Activated CD8-positive, alpha-beta T cell treated with anti-CD3 and anti-CD28 coated beads for 36 hours (primary cell): ENCODE measurements at regions of chr12 and their contacts with region 1.

Region 1: DNA sequence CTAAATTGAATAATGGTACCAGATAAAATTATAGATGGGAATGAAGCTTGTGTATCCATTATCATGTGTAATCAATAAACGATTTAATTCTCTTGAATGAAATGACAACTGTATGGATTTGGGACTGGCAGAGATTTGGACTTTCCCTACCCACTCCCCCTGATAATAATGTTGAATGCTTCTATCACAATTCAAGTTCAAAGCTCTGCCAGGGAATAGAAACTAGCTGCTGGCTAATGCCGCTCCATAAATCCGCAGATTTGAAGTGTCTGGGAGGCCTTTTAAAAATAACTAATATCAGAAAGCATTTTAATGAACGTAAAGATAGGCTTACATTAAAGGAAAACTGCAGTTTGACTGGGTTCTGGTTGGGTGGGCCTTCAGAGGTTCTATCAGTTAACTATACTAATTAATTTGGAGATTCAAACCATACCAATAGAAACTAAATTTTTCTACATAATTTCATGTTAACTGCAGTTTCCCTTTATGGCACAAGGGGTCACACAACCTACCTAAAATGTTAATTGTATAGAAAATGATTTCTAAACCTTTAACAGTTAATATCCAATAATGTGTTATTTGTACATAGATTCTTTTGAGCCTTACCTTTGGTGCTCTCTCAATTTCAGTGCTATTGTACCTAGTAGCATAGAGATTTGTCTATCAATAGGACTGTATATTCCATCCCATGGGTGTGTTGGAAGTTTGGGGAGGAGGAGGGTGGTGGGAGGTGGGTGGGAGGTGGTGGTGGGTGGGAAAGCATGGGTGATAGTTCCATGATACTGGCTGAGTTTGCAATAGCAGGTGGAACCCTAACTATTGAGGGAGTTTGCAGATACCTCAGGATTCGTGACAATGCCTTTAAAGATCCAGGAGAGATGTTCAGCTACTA is 4.9 kb downstream of the HNRNPA1 start:
- DNase-seq: no peak
- ATAC-seq: no peak
- H3K4me3 Mint-ChIP-seq: no peak overlapping the region
- H3K27ac Mint-ChIP-seq: peak overlapping the region; percentile 73
- H3K4me1 Mint-ChIP-seq: peaks cover 38% of the 10 kb centered on the region
- H3K27me3 Mint-ChIP-seq: no peaks in the 10 kb centered on the region
- CTCF ChIP-seq: peak; percentile 57

Region 2: DNA sequence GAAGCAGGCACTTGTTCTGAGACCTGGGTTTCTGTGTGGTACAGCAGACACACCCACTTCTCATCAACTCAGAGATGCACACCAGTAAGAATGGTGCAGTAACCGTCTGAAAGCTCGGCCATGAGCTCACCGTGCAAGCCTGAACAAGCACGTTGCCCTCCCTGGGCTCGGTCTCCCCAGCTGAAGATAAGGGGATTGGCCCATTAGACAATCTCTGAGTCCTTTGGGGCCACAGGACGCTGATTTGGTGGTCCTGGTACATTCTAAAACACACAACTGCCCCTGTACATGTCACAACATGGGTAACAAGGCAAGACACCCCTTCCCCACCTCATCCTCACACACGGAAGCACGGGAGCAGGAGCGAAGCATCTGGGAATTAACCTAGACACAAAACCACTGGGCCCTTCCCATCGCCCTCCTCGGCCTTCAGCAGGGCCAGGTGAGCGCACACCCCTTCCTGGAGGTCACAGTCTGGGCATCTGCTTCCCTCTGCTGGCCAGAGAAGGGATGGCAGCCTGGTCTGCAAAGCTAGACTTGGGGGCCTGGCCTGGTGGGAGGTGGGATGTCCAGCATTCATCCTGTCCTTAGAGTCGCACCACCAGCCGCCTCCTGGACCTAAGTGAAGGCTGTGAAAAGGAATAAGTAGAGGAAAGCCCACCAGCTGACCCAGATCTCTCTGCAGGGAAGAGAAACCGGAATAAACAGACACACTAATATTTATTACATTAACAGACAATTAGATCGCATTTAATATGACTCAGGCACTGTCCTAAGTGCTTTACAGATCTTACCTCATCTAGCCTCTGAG is 77.7 kb before region 1 on chr12:
- CTCF ChIA-PET with region 1: no interaction called
- POLR2A ChIA-PET with region 1: no interaction called
- intact Hi-C with region 1: no loop called
- DNase-seq: peak; percentile 90
- ATAC-seq: peak; percentile 96
- H3K4me3 Mint-ChIP-seq: no peak overlapping the region
- H3K27ac Mint-ChIP-seq: no peak overlapping the region
- H3K4me1 Mint-ChIP-seq: no peaks in the 10 kb centered on the region
- H3K27me3 Mint-ChIP-seq: peaks cover 15% of the 10 kb centered on the region
- CTCF ChIP-seq: peak; percentile 92

Region 3: DNA sequence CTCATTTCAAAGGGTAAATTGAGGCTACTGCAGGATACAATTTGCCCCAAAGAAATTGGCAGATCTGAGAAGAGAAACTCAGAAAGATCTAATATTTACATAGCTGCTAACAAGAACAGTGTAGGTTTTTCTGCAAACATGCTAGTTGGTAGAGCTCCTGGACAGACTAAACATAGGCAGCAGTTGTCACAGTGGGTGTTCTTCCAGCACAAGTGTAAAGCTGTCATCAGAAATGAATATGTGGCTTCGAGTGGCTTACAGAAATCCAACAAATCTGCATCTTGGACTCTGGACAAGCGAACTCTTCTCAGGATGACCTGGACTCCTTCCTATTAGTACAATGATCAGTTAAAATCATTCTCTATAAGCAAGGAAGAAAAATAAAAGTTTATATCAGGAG is 11.4 kb before region 1 on chr12:
- CTCF ChIA-PET with region 1: interaction called, 5 read pairs
- POLR2A ChIA-PET with region 1: interaction called, 17 read pairs
- intact Hi-C with region 1: no loop called
- DNase-seq: no peak
- ATAC-seq: no peak
- H3K4me3 Mint-ChIP-seq: no peak overlapping the region
- H3K27ac Mint-ChIP-seq: no peak overlapping the region
- H3K4me1 Mint-ChIP-seq: peaks cover 62% of the 10 kb centered on the region
- H3K27me3 Mint-ChIP-seq: no peaks in the 10 kb centered on the region
- CTCF ChIP-seq: no peak

Region 4: DNA sequence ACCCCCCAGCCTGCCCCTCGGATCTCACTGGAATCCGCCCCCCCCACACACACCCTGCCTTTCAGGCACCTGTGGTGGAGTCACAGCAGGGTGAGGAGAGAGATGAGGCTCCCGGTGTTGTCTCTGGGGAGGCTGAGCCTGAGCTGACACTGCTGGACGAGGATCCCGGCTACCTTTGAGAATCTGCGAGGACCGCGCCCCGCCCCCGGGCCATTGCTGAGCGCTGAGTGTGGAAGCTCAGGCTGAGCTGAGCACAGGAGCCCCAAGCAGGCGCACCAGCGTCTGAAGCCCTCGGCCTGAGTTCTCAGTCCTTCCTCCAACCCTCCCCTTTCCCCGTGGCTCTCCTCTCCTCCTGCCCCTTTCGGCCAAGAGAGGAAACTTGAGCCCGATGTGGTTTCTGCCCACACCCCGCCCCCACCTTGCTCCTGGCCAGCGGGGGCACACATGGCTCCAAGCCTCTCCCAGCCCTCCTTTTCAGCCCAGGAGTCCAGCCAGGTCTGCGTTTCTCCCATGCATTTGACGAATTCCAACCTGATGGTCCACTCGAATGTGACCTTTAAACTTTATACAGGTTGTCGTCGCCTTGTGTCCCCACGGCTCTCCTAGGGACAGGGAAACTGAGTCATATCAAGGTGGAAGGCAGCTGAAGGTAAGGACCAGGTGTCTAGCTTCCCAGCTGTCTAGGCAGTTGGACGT is 15.5 kb after region 1 on chr12 and contains the start of gene NFE2:
- CTCF ChIA-PET with region 1: interaction called, 9 read pairs
- POLR2A ChIA-PET with region 1: interaction called, 34 read pairs
- intact Hi-C with region 1: no loop called
- DNase-seq: peak; percentile 55
- ATAC-seq: peak; percentile 69
- H3K4me3 Mint-ChIP-seq: no peak within 1 kb of the TSS
- H3K27ac Mint-ChIP-seq: no peak within 1 kb of the TSS
- H3K4me1 Mint-ChIP-seq: peaks cover 10% of the 10 kb centered on the region
- H3K27me3 Mint-ChIP-seq: peaks cover 45% of the 10 kb centered on the region
- CTCF ChIP-seq: no peak
- total RNA-seq, gene NFE2: not detected

Region 5: DNA sequence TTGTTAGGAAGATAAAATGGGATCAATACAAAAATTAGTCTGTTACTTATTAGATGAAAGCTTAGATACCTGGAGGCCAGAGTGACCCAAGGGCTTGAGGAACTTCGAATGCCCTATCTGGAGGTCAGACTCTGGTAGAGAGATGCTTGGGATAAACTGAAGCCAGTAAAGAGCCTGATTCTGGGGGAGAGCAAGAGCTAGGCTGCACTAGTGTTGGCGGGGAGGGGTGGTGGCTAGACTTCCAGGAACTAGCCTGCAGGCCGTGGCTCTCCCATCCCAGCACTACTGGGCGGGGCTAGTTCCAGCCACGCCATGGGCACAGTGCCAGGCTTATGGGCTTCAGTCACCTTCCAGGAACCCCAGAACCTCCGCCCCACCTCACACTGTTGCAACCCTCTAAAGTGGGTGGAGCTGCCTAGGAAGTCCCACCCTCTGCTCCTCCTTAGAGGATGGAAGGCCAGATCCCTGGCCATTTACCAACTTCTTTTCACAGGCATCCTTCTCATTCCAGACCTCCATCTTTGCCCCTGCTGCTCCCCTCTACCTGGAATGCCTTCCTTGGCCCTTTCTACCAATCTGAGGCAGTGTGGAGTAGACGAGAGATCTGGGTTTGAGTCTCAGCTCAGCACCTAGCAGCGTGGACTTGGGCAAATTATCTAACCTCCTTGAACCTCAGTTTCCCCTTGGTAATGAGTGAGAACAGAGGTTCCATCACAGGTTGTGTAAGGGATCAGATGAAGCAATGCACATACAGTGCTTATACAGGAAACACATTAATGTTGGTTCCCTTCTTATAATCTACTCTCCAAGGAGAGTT is 21.7 kb after region 1 on chr12:
- CTCF ChIA-PET with region 1: no interaction called
- POLR2A ChIA-PET with region 1: interaction called, 16 read pairs
- intact Hi-C with region 1: no loop called
- DNase-seq: peak; percentile 44
- ATAC-seq: peak; percentile 69
- H3K4me3 Mint-ChIP-seq: no peak overlapping the region
- H3K27ac Mint-ChIP-seq: no peak overlapping the region
- H3K4me1 Mint-ChIP-seq: peaks cover 9% of the 10 kb centered on the region
- H3K27me3 Mint-ChIP-seq: peaks cover 15% of the 10 kb centered on the region
- CTCF ChIP-seq: no peak

Region 6: DNA sequence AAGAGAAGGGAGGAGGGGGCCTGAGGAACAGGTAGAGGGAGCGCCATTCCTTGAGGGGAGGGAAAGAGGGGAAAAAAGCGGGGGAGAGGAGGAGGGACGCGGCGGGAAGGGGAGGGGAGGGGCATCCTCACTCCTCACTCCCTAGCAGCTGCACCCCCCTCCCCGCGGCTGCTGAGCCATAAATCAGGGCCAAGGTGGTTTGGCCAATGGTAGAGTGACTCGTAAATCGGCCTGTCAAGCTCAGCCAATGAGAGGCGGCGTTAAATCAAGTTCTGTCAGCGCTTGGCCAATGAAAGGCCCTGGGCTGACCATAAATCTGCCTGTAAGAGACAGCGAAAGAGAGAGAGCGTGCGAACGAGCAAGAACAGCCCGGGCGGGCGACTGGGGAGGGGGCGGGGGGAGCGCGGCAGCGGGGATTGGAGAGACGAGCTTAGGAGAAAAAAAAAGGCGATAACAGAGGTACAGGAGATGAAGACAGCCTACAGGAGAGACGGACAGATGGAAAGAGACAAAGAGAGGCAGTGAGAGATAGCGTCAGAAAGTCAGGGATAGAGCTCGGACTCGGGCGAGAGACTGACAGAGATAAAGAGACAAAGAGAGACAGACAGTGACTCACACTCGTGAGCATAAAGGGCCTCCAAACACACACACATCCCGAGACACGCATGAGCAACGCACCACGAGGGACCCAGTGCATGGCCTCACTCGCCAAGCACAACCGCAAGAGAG is 73.8 kb after region 1 on chr12:
- CTCF ChIA-PET with region 1: interaction called, 117 read pairs
- POLR2A ChIA-PET with region 1: interaction called, 70 read pairs
- intact Hi-C with region 1: loop called (anchors 5 kb)
- DNase-seq: peak; percentile 97
- ATAC-seq: peak; percentile 93
- H3K4me3 Mint-ChIP-seq: no peak overlapping the region
- H3K27ac Mint-ChIP-seq: no peak overlapping the region
- H3K4me1 Mint-ChIP-seq: peaks cover 17% of the 10 kb centered on the region
- H3K27me3 Mint-ChIP-seq: no peaks in the 10 kb centered on the region
- CTCF ChIP-seq: no peak